Activated CD4-positive, alpha-beta memory T cell treated with anti-CD3 and anti-CD28 coated beads, Interleukin-2, amount 10 ng/mL, durations not matched to agents 7 days and 5 days (primary cell): ENCODE measurements at regions of chr5 and their contacts with region 1.

Region 1: DNA sequence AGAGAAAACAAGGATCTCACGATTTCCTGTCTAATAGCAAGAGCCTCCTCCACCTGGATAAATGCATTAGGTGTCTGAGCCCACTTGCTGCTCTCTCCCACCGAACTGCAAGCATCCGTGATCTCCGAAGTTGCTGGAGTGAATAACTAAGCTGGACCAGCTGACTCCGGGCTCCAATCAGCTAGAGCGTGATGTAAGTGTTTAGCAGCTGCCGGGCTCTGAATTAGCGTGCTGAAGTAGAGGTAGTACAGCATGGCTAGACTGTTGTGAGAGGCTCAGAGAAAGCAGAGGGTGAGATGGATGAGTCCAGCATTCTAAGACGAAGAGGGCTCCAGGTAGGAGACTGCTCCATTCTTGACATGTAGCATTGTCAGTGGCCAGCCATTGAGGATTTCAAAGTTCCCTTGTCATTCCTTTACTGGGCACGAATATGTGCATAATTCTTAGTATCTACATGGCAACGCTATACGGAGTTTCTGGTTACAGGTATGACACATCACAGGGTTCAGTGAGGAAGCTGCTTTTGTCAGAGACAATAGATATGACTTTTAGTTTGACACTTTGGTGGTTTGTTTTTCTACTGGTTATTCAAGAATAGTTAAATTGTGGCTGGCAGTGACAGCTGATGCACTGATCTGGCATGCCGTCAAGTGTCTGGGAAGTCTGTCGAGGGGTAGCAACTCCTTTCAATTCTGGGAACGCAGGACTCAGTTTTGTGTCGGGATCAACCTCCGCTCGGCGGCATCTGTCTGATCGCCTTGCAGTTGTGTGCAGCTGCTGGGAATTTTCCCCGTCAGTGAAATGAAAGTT is 232.6 kb downstream of the MAST4 start:
- DNase-seq: peak; percentile 82
- H3K4me3 Mint-ChIP-seq: peak overlapping the region; percentile 86
- H3K27ac Mint-ChIP-seq: peak overlapping the region; percentile 84
- H3K4me1 Mint-ChIP-seq: peaks cover 66% of the 10 kb centered on the region
- H3K27me3 Mint-ChIP-seq: no peaks in the 10 kb centered on the region

Region 2: GRCh38 chr5:66864331-66864840 is 35.6 kb after region 1 on chr5:
- CTCF ChIA-PET with region 1: interaction called, 11 read pairs
- POLR2A ChIA-PET with region 1: interaction called, 4 read pairs
- DNase-seq: peak; percentile 28
- H3K4me3 Mint-ChIP-seq: no peak overlapping the region
- H3K27ac Mint-ChIP-seq: no peak overlapping the region
- H3K4me1 Mint-ChIP-seq: peaks cover 33% of the 10 kb centered on the region
- H3K27me3 Mint-ChIP-seq: peaks cover 16% of the 10 kb centered on the region